Endothelial cell of umbilical vein (primary cell): ENCODE measurements at regions of chr22 and their contacts with region 1.

Region 1: DNA sequence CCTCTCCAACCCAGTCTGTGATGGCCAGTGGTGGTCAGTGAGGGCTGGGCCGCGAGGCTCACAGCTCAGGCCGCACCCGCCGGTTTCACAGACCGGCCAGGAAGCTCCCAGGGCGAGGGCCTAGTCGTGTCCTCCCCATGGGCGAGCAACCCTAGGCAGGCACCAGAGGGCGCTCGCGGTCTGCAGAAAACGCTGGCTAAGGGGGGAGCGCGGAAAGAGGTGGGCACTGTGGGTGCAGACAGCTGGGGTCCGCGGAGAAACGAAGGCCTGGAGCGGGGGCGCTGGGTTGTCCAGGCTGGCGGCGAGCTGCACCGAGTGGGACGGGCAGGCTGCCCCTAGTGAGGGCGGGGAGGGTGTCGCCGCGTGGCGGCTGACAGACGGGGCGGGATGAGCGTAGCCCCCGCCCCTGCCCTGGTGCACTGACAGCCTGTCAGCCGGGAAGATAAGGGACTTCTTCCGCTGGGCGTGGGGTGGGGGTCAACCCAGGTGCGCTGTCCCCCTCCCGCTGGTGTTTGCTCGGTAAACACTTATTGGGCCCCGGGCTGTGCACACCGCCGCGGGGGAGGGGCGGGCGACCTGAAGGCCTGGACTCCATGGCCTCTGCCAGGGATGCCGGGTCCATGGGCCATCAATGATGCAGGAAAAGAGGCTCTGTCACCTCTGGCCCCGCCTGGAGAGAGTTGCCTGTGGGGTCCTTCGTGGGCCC is 7.5 kb downstream of the GP1BB start:
- DNase-seq: peak; percentile 67
- H3K4me3 ChIP-seq: peak overlapping the region in 2 of 3 experiments; percentile 6 to 25
- H3K27ac ChIP-seq: no peak overlapping the region
- H3K4me1 ChIP-seq: peaks cover 3% of the 10 kb centered on the region
- H3K27me3 ChIP-seq: no peaks in the 10 kb centered on the region
- CTCF ChIP-seq: peak; percentile 94 to 98
- POLR2A ChIP-seq: no peak

Region 2: DNA sequence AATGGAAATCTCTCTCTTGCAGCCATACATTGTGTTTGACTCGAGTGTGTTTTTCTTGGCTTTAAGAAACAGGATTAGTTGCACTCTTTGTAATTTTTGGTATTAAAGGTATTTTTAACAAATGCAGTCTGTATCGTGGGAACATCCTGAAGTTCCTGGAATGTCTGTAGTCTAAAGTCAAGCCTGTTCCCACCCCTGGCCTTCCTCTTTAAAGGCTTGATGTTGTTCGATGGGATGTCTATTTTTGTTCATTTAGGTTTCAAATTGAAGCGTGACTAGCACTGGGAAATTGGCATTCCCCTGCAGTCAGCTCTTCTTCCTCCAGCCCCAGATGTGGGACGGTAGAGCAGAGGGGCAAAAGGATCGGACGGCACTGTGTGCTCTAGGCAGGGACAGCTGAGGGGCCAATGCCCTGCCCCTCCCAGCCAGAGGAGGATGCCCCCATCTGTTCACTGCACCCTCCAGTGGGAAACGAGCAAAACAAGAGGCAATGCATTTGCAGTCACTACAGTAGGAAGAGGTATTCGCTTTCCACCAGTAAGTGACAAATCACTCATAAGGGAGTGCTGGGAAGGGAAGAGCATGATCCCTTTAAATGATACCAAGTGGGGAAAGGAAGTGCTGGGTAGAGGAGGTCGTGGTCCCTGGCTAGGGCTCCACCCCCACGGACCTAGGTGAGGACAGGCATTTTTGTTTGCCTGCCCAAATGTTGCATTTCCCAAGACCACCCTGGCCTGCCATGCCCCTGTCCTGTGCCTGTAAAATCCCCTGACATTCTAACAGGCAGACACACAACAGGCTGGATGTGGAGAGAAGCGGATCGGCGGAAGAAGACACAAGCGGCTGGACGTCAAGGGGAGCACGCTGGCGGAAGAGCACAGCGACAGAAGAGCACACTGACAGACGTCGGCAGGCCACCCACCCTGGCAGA is 63.9 kb before region 1 on chr22:
- CTCF ChIA-PET with region 1: no interaction called
- POLR2A ChIA-PET with region 1: no interaction called
- dilution Hi-C with region 1: no loop called
- intact Hi-C with region 1: no loop called
- DNase-seq: peak; percentile 92
- H3K4me3 ChIP-seq: no peak overlapping the region
- H3K27ac ChIP-seq: no peak overlapping the region
- H3K4me1 ChIP-seq: no peaks in the 10 kb centered on the region
- H3K27me3 ChIP-seq: peaks cover 0 to 21% of the 10 kb centered on the region in 2 experiments
- CTCF ChIP-seq: no peak
- POLR2A ChIP-seq: no peak

Region 3: DNA sequence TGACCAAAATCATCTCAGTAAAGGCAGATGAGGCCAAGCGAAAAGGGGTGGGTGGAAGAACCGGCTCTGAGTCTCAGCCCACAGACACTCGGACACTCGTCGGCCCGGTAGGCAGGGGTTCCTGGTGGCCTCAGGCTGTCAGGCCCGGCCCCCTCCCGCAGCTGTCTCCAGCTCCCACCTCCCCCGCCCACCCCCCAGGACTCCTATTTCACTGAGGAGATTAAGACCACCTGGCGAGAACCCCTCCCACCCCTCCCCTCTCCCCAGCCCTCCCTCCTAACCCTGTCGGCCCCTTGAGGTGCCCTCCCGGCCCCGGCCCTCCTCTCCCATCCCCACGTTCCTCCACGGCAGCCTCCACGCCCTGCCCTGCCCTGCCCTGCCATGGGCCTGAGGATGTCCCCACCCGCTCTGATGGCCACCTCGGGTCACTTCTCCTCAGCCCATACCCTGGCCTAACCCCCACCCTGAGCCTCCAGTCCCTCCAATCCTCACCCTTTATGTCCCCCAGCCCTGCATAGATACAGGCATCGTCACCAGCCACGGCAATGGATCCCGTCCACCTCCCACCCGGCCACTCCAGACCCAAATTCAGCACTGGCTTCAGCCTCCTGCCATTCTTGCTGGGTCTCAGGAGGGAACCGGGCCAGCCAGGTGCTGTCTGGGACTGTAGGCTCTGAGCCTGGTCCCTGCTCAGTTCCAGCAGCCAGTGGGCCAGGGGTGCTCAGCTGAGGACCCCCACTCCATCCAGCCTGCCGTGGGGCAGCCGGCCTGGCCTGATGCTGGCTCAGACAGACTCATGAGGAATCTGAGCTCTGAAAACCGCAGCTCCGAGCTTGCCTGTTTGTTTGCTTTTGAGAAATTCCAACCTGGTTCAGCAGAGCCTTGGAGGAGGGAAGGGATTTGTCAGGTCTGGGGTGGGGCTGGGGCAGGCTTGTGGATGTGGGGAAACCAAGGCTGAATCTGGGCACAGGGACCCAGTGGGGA is 20.0 kb after region 1 on chr22:
- CTCF ChIA-PET with region 1: interaction called, 32 read pairs
- POLR2A ChIA-PET with region 1: no interaction called
- dilution Hi-C with region 1: no loop called
- intact Hi-C with region 1: no loop called
- DNase-seq: no peak
- H3K4me3 ChIP-seq: no peak overlapping the region
- H3K27ac ChIP-seq: no peak overlapping the region
- H3K4me1 ChIP-seq: peaks cover 5% of the 10 kb centered on the region
- H3K27me3 ChIP-seq: peaks cover 14 to 21% of the 10 kb centered on the region in 2 experiments
- CTCF ChIP-seq: no peak
- POLR2A ChIP-seq: no peak

Region 4: DNA sequence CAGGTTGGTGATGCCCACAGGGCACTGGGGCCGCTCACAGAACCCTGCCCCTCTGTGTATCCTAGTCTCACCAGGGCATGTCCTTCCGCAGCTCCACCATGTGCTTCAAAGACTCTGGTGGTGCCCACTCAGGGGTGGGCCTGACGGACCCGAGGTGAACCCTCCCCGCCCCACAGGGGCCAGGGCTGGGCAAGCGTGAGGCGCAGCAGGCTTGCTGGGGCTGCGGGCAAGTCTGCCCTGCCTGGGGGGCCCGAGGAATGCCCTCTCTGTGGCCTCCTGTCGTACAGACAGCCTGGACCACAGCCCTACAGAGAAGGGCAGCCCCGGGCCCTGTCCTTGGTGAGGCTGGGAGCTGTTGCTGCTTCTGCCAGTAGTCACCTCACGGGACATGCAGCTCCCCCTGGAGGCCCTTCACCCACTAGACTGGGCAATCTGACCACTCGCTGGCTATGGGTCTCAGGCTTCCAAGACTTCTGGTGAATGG is 70.0 kb after region 1 on chr22:
- CTCF ChIA-PET with region 1: interaction called, 25 read pairs
- POLR2A ChIA-PET with region 1: no interaction called
- dilution Hi-C with region 1: no loop called
- intact Hi-C with region 1: loop called (anchors 2 kb)
- DNase-seq: peak; percentile 29
- H3K4me3 ChIP-seq: no peak overlapping the region
- H3K27ac ChIP-seq: no peak overlapping the region
- H3K4me1 ChIP-seq: peaks cover 2% of the 10 kb centered on the region
- H3K27me3 ChIP-seq: no peaks in the 10 kb centered on the region
- CTCF ChIP-seq: peak; percentile 24 to 65
- POLR2A ChIP-seq: no peak

Region 5: DNA sequence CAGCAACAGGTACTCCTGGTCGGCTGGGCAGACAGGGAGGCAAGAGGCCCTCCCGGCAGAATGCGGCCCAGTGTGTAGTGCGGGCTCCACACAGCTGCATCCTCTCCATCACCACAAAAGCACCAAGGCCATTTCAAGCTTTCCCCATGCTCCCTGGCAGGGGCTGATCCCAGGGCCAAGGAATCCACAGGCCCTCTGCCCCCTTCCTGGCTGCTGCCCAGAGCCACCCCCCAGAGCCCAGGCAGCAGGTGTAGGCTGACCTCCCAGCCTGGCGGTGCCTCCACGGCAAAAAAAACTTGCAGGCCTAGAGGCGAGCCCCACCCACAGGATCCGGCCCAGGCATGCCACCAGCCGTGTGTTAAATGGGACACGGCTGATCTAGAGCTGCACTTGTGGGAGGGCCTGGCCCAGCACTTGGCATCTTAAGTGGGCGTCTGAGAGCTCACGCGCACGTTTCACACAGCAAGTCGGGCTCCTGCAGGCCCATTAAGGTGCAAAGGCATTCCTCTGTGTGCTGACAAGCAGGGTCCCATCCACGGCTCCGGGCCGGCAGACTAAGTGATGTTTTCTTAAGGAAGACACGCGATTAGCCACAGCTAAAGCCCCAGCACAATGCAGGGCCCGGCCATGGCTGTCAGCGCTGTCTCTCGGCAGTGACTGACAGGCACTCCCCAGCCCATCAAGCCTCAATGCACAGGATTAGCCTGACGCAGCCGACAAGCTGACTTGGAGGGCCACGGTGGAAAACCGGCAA is 143.7 kb after region 1 on chr22:
- CTCF ChIA-PET with region 1: interaction called, 21 read pairs
- POLR2A ChIA-PET with region 1: no interaction called
- dilution Hi-C with region 1: no loop called
- intact Hi-C with region 1: no loop called
- DNase-seq: peak; percentile 77
- H3K4me3 ChIP-seq: no peak overlapping the region
- H3K27ac ChIP-seq: peak overlapping the region; percentile 77
- H3K4me1 ChIP-seq: peaks cover 54% of the 10 kb centered on the region
- H3K27me3 ChIP-seq: no peaks in the 10 kb centered on the region
- CTCF ChIP-seq: no peak
- POLR2A ChIP-seq: peak; percentile 35

Region 6: GRCh38 chr22:19909350-19910179 is 178.8 kb after region 1 on chr22:
- CTCF ChIA-PET with region 1: interaction called, 372 read pairs
- POLR2A ChIA-PET with region 1: no interaction called
- dilution Hi-C with region 1: no loop called
- intact Hi-C with region 1: loop called (anchors 1 kb)
- DNase-seq: peak; percentile 77
- H3K4me3 ChIP-seq: no peak overlapping the region
- H3K27ac ChIP-seq: no peak overlapping the region
- H3K4me1 ChIP-seq: peaks cover 3% of the 10 kb centered on the region
- H3K27me3 ChIP-seq: no peaks in the 10 kb centered on the region
- CTCF ChIP-seq: peak; percentile 86 to 88
- POLR2A ChIP-seq: no peak

Region 7: DNA sequence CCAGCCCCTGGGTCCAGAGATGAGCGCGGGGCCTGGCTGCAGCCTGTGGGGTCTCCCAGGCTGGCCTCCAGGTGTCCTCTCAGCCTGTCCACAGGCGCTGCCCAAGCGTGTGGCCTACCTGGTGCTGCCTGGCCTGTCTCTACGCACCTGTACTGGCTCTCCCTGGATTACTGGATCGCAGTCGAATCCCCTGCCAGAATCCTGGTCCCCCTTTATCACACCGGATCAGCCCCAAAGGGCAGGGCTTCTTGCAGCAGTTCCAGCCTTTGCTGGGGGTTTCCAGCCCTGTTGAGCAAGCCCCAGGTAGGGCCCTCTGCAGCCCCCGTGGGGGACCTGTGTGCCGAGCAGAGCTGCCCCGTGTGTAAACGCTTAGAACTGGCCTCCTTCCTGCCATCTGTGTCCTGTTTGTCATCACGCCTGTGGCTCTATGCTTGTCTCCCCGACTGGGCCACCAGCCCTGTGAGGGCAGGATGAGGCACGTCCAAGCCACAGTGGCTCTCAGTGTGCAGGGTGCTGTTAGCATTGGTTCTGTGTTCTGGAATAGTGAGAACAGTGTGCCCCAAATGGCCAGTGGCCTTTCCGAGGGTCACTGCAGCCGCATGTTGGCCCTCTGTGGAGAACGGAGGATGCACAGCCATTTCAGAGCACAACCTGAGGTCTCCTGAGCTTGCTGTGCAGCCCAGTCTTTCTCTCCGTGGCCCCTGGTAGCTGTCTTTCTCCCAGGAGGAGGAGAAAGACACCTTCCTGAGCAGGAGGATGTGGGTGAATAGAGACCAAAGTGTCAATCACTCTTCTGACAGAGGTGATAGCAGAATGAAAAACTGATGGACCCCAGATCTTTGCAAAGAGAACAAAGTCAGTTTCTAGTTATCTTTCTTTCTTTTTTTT is 224.7 kb after region 1 on chr22:
- CTCF ChIA-PET with region 1: interaction called, 26 read pairs
- POLR2A ChIA-PET with region 1: no interaction called
- dilution Hi-C with region 1: no loop called
- intact Hi-C with region 1: no loop called
- DNase-seq: no peak
- H3K4me3 ChIP-seq: no peak overlapping the region
- H3K27ac ChIP-seq: no peak overlapping the region
- H3K4me1 ChIP-seq: peaks cover 10% of the 10 kb centered on the region
- H3K27me3 ChIP-seq: no peaks in the 10 kb centered on the region
- CTCF ChIP-seq: no peak
- POLR2A ChIP-seq: no peak